ENCODE measurements at regions of chr7 and their contacts with region 1.

Region 1: DNA sequence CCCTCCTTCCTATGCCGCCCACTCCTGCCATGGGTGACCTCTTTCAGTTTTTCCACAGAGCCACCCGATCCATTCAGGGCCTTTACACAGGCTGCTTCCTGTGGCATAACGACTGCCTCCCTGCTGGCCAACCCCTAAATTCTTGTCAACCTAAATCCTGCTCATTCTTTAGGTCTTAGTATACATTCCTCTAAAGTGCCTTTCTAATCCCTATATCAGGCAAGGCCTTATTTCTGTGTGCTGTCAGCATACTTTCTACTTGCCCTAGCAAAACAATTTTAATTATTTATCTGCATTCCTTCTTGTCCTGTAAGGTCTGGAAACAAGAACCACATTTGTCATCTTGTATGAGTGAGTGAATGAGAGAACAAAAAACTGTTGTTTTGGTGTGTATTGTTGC is 132.4 kb downstream of the DNAH11 start:
- DNase-seq: no peak
- ATAC-seq: no peak
- H3K4me3 ChIP-seq: no peak overlapping the region
- H3K27ac ChIP-seq: no peak overlapping the region
- H3K4me1 ChIP-seq: no peaks in the 10 kb centered on the region
- H3K27me3 ChIP-seq: no peaks in the 10 kb centered on the region
- CTCF ChIP-seq: no peak

Region 2: DNA sequence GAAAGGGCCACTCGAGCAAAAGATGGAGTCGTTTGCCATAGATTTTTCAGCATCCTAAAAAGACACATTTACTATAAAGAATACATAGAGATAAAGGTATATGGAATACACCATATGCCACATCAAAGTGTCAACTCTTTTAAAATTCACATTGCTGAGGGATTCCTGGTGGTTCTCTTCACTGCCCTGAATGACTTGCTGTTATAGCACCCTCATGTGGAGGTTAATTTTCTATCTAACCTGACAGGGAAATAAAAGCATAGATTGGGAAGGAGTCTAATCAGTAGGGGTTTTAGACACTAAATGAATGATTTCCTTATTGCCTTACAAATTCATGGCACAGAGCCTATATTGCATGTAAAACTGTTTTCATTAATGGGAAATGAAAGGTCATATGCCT is 106.5 kb before region 1 on chr7:
- intact Hi-C with region 1: loop called in 1 of 10 experiments (anchors 1 kb)
- DNase-seq: no peak
- ATAC-seq: no peak
- H3K4me3 ChIP-seq: no peak overlapping the region
- H3K27ac ChIP-seq: no peak overlapping the region
- H3K4me1 ChIP-seq: no peaks in the 10 kb centered on the region
- H3K27me3 ChIP-seq: peaks cover 0 to 7% (median 0%) of the 10 kb centered on the region in 7 donors
- CTCF ChIP-seq: peak in 7 of 9 donors; percentile 19 to 37 (median 31)

Region 3: GRCh38 chr7:21771906-21772610 is 96.8 kb after region 1 on chr7:
- intact Hi-C with region 1: no loop called
- DNase-seq: no peak
- ATAC-seq: peak in 1 of 8 donors; percentile 25
- H3K4me3 ChIP-seq: no peak overlapping the region
- H3K27ac ChIP-seq: no peak overlapping the region
- H3K4me1 ChIP-seq: peaks cover 0 to 9% (median 0%) of the 10 kb centered on the region in 9 donors
- H3K27me3 ChIP-seq: peaks cover 0 to 6% (median 0%) of the 10 kb centered on the region in 7 donors
- CTCF ChIP-seq: no peak